ENCODE measurements at regions of chr15 and their contacts with region 1.

Region 1: GRCh38 chr15:78177447-78177873 is 28.3 kb downstream of the IDH3A start:
- H3K4me3 ChIP-seq: no peak overlapping the region
- H3K27ac ChIP-seq: no peak overlapping the region
- H3K4me1 ChIP-seq: no peaks in the 10 kb centered on the region
- CTCF ChIP-seq: peak; percentile 71

Region 2: DNA sequence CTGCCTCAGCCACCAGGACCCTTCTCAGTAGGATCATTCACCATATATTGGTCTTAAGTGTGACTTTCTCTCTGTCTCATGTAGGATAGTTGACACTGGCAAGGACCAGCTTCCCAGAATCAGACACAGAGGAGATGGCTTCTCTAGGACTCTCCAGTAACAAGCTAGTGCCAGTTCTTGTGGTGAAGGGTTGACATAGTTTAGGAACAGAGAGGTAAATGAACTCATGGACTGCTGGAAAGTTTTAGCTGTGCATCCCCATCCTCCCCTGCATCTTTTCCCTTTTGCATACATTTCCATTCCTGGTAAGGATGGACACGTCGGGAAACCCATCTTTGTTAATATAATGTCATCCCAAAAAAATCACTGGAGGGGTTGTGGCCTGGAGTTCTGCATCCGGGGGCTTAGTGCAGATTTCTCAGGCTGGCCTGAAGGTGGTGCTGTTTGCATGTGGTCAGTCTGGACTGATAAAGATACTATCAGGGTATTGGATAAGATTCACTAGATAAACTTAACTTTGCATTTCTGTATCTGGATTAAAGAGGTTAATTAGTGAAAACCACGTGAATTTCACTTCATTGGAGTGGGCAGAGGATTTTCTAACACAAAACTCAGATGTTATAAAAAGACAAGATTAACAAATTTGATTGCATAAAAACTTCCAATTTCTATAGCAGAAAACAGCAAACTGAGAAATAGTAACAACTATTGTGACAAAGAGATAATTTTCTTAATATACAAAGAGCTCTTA is 210.7 kb before region 1 on chr15:
- CTCF ChIA-PET with region 1: interaction called, 12 read pairs
- POLR2A ChIA-PET with region 1: no interaction called
- H3K4me3 ChIP-seq: no peak overlapping the region
- H3K27ac ChIP-seq: no peak overlapping the region
- H3K4me1 ChIP-seq: no peaks in the 10 kb centered on the region
- CTCF ChIP-seq: no peak

Region 3: GRCh38 chr15:78023865-78024518 is 153.5 kb before region 1 on chr15:
- CTCF ChIA-PET with region 1: no interaction called
- POLR2A ChIA-PET with region 1: no interaction called
- H3K4me3 ChIP-seq: no peak overlapping the region
- H3K27ac ChIP-seq: no peak overlapping the region
- H3K4me1 ChIP-seq: no peaks in the 10 kb centered on the region
- CTCF ChIP-seq: no peak

Region 4: GRCh38 chr15:78087951-78088772 is 89.3 kb before region 1 on chr15:
- CTCF ChIA-PET with region 1: no interaction called
- POLR2A ChIA-PET with region 1: no interaction called
- H3K4me3 ChIP-seq: no peak overlapping the region
- H3K27ac ChIP-seq: no peak overlapping the region
- H3K4me1 ChIP-seq: no peaks in the 10 kb centered on the region
- CTCF ChIP-seq: no peak

Region 5: GRCh38 chr15:78162038-78162437 is 15.4 kb before region 1 on chr15:
- CTCF ChIA-PET with region 1: interaction called, 20 read pairs
- POLR2A ChIA-PET with region 1: no interaction called
- H3K4me3 ChIP-seq: no peak overlapping the region
- H3K27ac ChIP-seq: no peak overlapping the region
- H3K4me1 ChIP-seq: peaks cover 4% of the 10 kb centered on the region
- CTCF ChIP-seq: no peak

Region 6: DNA sequence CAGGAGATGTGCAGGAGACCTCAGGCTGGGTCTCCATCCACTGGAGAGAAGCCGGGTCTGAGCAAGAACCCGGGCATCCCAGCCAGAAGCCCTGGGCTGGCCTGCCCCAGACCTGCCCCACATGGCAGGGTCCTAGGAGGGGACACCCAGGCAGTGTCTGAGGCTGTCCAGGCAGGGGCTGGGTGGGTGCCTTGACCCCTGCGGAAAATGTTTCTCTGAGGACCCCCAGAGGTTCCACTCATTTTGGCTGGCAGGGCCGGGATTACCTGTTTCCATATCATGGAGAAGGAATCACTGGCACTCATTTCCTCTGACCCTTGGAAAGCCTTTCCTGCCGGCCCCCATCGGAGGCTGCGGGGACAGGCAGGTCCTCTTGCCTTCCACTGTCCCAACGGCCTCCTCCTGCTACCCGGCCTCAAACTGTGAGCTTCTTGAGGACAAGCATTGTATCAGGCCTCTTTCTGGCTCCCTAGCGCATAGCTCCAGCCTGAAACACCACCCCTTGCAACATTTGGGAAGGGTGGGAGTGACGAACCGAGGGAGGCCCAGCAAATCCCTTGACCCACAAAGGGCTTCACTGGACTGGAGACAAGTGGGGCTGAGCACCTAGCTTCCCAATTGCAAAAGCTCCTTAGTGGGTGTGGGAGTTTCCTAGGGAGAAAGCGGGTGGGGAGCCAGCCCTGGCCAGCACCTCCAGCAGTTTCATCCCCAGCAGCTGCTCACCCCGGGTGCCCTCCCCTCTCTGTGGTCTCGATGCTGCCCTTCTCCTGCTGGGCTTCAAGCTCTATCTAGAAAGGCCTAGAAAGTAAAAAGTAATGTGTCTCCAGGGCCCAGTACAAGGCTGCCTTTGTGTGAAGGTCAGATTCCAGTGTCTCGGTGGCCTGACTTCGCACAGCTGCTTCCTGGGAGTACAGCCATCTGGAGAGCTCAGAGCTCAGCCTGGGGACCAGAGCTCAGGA is 27.2 kb after region 1 on chr15:
- CTCF ChIA-PET with region 1: interaction called, 14 read pairs
- POLR2A ChIA-PET with region 1: no interaction called
- H3K4me3 ChIP-seq: no peak overlapping the region
- H3K27ac ChIP-seq: no peak overlapping the region
- H3K4me1 ChIP-seq: no peaks in the 10 kb centered on the region
- CTCF ChIP-seq: no peak

Region 7: GRCh38 chr15:78259232-78259631 is 81.8 kb after region 1 on chr15:
- CTCF ChIA-PET with region 1: interaction called, 11 read pairs
- POLR2A ChIA-PET with region 1: no interaction called
- H3K4me3 ChIP-seq: no peak overlapping the region
- H3K27ac ChIP-seq: no peak overlapping the region
- H3K4me1 ChIP-seq: no peaks in the 10 kb centered on the region
- CTCF ChIP-seq: no peak

Measured in HEK293 (cell line).